Heart right ventricle (tissue), 16 donors: ENCODE measurements at regions of chr14 and their contacts with region 1.

Region 1: GRCh38 chr14:33938131-33938949 is 12.5 kb downstream of the EGLN3 start:
- DNase-seq: peak; percentile 81 to 86
- ATAC-seq: peak; percentile 84 to 97 (median 96)
- H3K4me3 ChIP-seq: peak overlapping the region in 8 of 10 donors; percentile 0 to 41 (median 31)
- H3K27ac ChIP-seq: peak overlapping the region; percentile 48 to 85 (median 80)
- H3K4me1 ChIP-seq: peaks cover 17 to 96% (median 69%) of the 10 kb centered on the region in 9 donors
- H3K27me3 ChIP-seq: no peaks in the 10 kb centered on the region
- CTCF ChIP-seq: no peak

Region 2: DNA sequence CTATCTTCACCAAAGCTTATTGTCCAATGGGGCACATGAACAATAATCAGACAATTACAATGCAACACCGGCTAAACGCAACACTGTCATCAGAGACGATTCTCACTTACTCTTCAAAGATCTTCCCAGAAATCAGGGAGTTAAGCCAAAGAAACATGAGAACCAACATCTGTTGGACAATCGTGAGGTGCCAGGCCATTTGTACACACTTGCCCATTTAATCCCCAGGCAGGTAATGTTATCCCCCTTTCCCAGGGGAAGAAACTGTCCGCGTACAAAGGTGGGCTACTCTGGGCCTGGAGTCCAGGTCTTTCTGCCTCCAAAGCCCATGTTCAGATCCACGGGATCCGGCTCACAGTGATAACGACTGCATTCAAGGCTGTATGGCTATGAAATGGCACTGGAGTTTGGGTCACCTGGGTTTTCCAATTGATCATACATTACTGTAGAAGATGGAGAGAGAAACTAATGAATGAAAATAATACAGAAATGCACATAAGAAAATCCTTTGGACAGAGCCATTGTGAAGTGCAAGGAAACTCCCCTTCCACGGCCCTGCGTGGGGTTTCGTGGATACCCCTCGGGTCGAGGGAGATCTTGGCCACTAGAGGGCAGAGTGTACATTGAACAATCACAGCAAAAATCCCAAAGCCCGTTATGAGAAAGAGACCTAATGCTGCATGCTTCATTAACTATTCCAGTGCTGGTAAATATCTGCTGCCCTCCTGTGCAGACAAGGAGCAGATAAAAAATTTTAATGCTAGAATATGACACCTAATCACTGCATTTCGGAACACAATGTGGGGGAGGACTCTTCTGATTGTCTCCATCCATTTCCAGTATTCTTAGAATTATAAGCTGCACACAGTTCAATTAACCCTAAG is 98.9 kb before region 1 on chr14:
- intact Hi-C with region 1: loop called in 2 of 10 experiments (anchors 10 kb)
- DNase-seq: peak; percentile 25 to 67
- ATAC-seq: peak; percentile 69 to 84 (median 78)
- H3K4me3 ChIP-seq: no peak overlapping the region
- H3K27ac ChIP-seq: no peak overlapping the region
- H3K4me1 ChIP-seq: peaks cover 0 to 16% (median 4%) of the 10 kb centered on the region in 9 donors
- H3K27me3 ChIP-seq: no peaks in the 10 kb centered on the region
- CTCF ChIP-seq: peak; percentile 76 to 94 (median 88)

Region 3: DNA sequence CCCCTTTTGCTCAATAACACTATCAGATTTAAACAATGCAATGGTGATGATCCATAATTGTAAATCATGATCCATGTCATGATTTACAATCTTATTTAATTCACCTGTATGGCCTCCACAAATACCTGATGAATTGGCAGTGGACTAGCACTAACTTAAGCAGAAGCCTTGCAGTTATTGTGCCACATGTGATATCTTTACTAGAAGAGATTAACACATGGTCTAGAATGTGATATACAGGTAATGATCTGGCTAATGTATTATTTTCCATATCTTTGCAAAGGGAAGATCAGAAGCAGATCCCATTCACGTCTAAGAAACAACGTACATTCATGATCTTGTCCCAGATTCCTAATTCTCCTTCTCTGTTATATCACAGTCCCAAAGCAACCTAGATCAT is 53.4 kb before region 1 on chr14:
- intact Hi-C with region 1: no loop called
- DNase-seq: no peak
- ATAC-seq: no peak
- H3K4me3 ChIP-seq: no peak overlapping the region
- H3K27ac ChIP-seq: no peak overlapping the region
- H3K4me1 ChIP-seq: peaks cover 0 to 11% (median 0%) of the 10 kb centered on the region in 9 donors
- H3K27me3 ChIP-seq: no peaks in the 10 kb centered on the region
- CTCF ChIP-seq: no peak

Region 4: GRCh38 chr14:33999771-34000291 is 61.5 kb after region 1 on chr14:
- intact Hi-C with region 1: loop called in 1 of 10 experiments (anchors 2 kb)
- DNase-seq: no peak
- ATAC-seq: peak in 2 of 8 donors; percentile 55 to 61
- H3K4me3 ChIP-seq: no peak overlapping the region
- H3K27ac ChIP-seq: no peak overlapping the region
- H3K4me1 ChIP-seq: peaks cover 0 to 8% (median 0%) of the 10 kb centered on the region in 9 donors
- H3K27me3 ChIP-seq: no peaks in the 10 kb centered on the region
- CTCF ChIP-seq: no peak

Region 5: GRCh38 chr14:34081576-34082136 is 143.3 kb after region 1 on chr14:
- intact Hi-C with region 1: loop called in 2 of 10 experiments (anchors 5 to 10 kb)
- DNase-seq: no peak
- ATAC-seq: peak; percentile 53 to 89 (median 78)
- H3K4me3 ChIP-seq: no peak overlapping the region
- H3K27ac ChIP-seq: peak overlapping the region; percentile 79 to 97 (median 94)
- H3K4me1 ChIP-seq: peaks cover 0 to 48% (median 19%) of the 10 kb centered on the region in 9 donors
- H3K27me3 ChIP-seq: no peaks in the 10 kb centered on the region
- CTCF ChIP-seq: no peak

Region 6: DNA sequence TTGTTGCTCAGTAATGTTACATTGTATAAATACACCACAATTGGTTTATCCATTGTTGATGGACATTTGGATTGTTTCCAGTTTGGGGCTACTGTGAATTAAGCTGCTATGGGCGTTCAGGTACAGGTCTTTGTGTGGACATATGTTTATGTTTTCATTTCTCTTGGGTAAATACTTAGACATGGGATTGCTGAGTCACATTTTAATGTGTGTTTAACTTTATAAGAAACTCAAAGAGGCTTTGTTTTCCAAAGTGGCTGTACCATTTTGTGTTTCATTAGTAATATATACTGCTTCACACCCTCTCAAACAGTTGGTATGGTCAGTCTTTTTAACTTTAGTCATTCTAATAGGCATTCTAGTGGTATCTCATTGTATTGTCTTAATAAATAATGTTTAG is 298.7 kb after region 1 on chr14:
- intact Hi-C with region 1: loop called in 1 of 10 experiments (anchors 10 kb)
- DNase-seq: no peak
- ATAC-seq: no peak
- H3K4me3 ChIP-seq: no peak overlapping the region
- H3K27ac ChIP-seq: no peak overlapping the region
- H3K4me1 ChIP-seq: peaks cover 0 to 51% (median 10%) of the 10 kb centered on the region in 9 donors
- H3K27me3 ChIP-seq: no peaks in the 10 kb centered on the region
- CTCF ChIP-seq: no peak